ENCODE measurements at regions of chr13 and their contacts with region 1.

Region 1: GRCh38 chr13:23231241-23231640 is 50.5 kb downstream of the SGCG start:
- DNase-seq: no peak
- ATAC-seq: no peak
- H3K4me3 ChIP-seq: no peak overlapping the region
- H3K27ac ChIP-seq: no peak overlapping the region
- H3K4me1 ChIP-seq: no peaks in the 10 kb centered on the region
- H3K27me3 ChIP-seq: no peaks in the 10 kb centered on the region
- CTCF ChIP-seq: no peak
- POLR2A ChIP-seq: no peak
- RAD21 ChIP-seq: no peak

Region 2: DNA sequence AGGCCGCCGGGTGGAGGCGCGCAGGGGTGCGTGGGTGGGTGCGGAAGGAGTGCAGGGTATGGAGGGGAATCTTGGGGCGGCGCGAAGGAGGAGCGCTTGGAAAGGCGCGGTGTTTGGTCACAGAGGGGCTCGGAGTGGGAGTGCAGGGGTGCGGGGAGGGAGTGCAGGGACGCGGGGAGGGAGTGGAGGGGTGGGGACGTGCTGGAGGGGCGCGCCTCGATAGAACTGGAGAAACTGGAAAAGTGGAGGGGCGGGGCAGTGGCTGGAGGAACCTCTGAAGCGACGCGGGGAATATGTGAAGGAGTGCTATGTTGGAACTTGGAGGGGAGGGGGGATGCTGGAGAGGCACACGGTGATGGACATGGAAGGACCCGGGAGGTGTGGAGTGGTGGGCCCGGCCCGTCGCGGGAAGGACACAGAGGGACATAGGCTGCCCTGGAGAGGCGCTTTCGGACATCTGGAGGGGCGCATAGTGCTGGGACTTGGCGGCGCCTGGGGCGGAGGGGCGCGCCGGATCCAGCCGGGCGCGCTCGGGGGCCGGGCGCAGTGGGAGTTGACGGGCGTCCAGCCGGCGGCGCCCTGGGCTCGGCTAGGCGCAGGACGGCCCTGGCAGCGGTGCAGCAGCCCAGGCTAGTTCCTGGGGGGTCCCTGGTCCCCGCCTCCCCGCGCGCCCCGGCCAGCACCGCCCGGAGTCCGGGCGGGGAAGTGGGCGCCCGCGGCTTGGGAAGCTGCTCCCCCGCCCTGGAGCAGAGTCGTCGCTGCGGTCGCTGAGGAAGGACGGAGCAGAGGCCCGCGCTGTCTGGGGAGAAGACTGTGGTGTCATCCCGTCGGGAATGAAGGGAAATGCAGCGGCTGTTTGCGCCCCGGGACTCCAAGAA is 71.2 kb before region 1 on chr13:
- CTCF ChIA-PET with region 1: no interaction called
- POLR2A ChIA-PET with region 1: no interaction called
- RAD21 ChIA-PET with region 1: no interaction called
- intact Hi-C with region 1: loop called (anchors 10 kb)
- DNase-seq: no peak
- ATAC-seq: no peak
- H3K4me3 ChIP-seq: no peak overlapping the region
- H3K27ac ChIP-seq: no peak overlapping the region
- H3K4me1 ChIP-seq: no peaks in the 10 kb centered on the region
- H3K27me3 ChIP-seq: no peaks in the 10 kb centered on the region
- CTCF ChIP-seq: no peak
- POLR2A ChIP-seq: no peak
- RAD21 ChIP-seq: no peak

Region 3: GRCh38 chr13:23243066-23243465 is 11.8 kb after region 1 on chr13:
- CTCF ChIA-PET with region 1: no interaction called
- POLR2A ChIA-PET with region 1: no interaction called
- RAD21 ChIA-PET with region 1: no interaction called
- intact Hi-C with region 1: no loop called
- DNase-seq: no peak
- ATAC-seq: no peak
- H3K4me3 ChIP-seq: no peak overlapping the region
- H3K27ac ChIP-seq: no peak overlapping the region
- H3K4me1 ChIP-seq: no peaks in the 10 kb centered on the region
- H3K27me3 ChIP-seq: no peaks in the 10 kb centered on the region
- CTCF ChIP-seq: no peak
- POLR2A ChIP-seq: no peak
- RAD21 ChIP-seq: no peak

Measured in HCT116 (cell line).